Posterior cingulate gyrus (tissue), 11 donors: ENCODE measurements at regions of chr2 and their contacts with region 1.

Region 1: GRCh38 chr2:97806738-97807618 is 93.6 kb downstream of the ZAP70 start:
- DNase-seq: peak; percentile 56 to 97 (median 85)

Region 2: DNA sequence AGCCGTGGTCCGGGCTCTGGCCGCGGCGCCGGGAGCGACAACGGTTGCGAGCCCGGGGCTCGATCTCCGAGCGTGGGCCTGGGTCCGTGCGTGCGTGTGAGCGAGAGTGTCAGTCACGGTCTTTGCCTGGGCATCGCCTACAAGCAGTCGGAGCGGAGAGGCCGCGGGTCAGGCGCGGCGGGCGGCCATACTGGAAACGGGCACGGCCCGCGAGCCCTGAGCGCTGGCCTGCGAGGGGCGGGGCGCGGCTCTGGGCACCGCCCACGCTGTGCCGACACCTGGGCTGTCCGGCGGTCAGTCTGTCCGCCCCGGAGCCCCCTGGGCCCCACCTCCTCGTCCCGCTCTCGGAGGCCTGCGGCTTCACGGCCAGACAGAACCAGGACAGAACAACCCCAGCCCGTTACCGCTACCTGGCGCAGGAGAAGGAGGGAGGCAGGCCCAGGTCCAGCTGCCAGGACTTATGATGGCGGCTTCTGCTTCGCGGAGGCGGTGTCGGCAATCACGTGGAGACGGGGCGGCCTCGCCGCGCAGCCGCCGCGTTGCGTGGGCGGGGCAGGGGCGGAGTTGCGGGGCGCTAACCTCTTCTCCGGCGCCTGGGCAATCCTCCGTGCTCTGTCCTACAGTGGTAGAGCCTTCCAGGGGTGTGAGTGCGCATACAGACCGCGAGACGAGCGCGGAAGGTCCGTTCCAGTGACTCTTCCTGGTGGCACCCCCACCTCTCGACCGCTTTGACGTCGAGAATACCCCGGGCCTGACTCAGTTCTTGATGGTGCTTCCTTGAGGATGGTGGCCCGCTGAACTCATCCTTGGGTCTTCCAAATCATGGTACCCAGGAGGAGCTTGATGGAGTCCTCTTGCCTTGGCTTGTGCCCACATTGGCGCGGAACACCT is 189.0 kb after region 1 on chr2 and contains the start of gene TMEM131:
- intact Hi-C with region 1: loop called (anchors 5 kb)
- DNase-seq: peak; percentile 87 to 99 (median 94)

Region 3: DNA sequence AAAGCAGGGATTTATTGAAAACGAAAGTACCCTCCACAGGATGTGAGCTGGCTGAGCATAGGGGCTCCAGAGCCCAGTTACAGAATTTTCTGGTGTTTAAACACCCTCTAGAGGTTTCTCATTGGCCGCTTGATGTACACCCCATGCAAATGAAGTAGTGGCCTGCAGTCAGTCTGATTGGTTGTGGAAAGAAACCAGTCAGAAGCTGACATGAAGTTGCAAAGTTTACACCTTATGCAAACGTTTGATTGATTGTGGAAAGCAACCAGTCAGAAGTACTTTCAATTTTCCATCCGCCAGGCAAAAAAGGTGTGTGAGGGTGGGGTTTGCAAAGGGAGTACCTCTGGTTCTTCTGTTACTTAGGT is 342.3 kb after region 1 on chr2:
- intact Hi-C with region 1: loop called (anchors 2 kb)
- DNase-seq: peak in 1 of 10 donors; percentile 28

Region 4: DNA sequence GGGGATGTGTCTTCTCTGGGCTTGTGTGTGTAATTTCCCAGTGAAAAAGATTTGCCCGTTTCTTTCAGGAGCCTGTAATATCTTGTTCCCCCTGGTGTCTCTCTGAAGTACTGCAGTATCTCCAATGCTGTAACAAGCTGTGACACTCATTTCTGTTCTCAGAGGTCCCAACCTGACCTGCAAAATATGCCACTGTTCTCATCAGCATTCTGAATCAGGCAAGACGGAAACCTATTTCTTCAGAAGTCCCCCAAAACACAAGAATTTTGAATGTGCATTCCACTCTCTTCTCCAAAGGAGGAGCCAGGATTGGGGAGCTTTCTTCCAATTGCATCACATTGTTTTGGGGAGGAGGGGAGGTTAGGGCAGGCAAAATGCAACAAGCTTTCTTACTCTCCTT is 462.3 kb after region 1 on chr2:
- intact Hi-C with region 1: loop called (anchors 1 kb)
- DNase-seq: no peak

Region 5: GRCh38 chr2:98385050-98385699 is 578.2 kb after region 1 on chr2:
- intact Hi-C with region 1: loop called (anchors 1 kb)
- DNase-seq: peak; percentile 64 to 97 (median 85)